MCF 10A (cell line): ENCODE measurements at regions of chr15 and their contacts with region 1.

Region 1: DNA sequence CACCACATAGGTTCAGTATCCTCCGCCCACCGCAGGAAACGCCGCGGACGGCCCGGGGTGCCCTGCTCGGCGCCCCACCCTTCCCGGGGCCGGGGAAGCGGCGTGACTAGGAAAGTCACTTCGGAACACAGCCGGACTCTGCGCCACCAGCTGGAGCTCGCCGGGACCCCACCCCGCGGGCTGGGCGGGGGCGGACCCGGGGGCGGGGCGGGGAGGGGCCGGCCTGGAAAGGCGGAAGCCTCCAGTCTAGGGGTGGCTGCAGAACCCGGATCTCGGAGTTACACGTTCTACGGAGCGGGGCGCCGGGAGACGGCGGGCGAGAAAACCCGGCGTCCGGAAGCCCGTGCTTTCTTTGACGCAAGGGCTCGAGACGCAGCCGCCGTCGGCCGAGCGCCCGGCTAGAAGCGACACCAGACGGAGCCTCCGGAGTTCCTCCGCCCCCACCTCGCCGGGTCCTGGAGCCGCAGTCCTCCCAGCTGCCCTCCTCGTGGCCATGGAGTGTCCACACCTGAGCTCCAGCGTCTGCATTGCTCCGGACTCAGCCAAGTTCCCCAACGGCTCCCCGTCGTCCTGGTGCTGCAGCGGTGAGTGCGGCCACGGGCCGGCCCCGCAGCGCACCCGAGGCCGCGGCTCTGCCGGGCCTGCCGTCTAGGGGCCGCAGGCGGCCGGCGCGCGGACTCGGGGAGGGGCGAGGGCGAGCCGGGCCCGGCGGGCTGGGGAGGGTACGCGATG is at the start of gene USP3:
- DNase-seq: peak; percentile 93
- H3K4me3 Mint-ChIP-seq: peak within 1 kb of the TSS; percentile 87
- H3K27ac Mint-ChIP-seq: peak within 1 kb of the TSS; percentile 97
- H3K4me1 Mint-ChIP-seq: peaks cover 43% of the 10 kb centered on the region
- H3K27me3 Mint-ChIP-seq: no peaks in the 10 kb centered on the region
- CTCF ChIP-seq: peak; percentile 40
- total RNA-seq, gene USP3: 59.0 and 70.2 TPM in 2 replicates

Region 2: GRCh38 chr15:63402498-63403253 is 101.7 kb before region 1 on chr15:
- CTCF ChIA-PET with region 1: interaction called, 3 read pairs
- POLR2A ChIA-PET with region 1: interaction called, 4 read pairs
- intact Hi-C with region 1: loop called (anchors 10 kb)
- DNase-seq: peak; percentile 58
- H3K4me3 Mint-ChIP-seq: no peak overlapping the region
- H3K27ac Mint-ChIP-seq: no peak overlapping the region
- H3K4me1 Mint-ChIP-seq: peaks cover 6% of the 10 kb centered on the region
- H3K27me3 Mint-ChIP-seq: no peaks in the 10 kb centered on the region
- CTCF ChIP-seq: peak; percentile 59

Region 3: DNA sequence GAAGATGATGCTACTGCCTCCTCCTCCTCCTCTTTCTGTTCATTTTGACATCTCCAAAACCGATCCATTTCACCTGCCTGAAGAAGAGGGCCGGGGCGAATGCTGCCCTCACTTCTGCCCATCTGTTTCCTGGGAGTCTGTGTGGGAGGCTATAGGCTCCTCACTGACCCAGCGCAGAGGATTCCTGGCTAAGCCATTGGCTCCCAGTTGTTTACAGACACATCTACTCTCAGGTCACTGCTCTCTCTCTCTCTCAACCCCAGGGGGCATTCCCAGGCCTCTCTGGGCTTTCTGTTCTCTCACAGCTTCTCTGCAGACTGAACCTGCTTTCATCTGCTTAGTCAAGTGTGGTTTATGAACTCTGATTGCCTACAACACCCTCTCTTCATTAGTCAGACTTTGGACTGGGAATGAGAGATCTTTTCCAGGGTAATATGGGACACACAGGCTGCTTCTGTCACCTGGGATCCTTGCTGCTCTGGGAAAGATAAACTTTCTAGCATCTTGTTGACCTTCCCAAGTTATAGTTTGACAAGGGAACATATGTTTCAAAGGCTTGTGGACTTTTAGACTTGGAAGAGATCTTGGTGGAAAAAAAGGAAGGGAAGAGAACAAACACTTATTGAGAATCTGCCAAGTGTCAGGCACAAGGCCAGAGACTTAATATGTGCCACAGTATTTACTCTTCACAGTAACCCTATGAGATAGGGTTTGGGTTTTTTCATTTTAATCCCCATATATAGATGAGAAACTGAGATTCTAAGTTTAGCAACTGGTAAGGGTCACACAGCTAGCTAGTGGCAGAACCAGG is 30.2 kb before region 1 on chr15:
- CTCF ChIA-PET with region 1: interaction called, 4 read pairs
- POLR2A ChIA-PET with region 1: interaction called, 26 read pairs
- intact Hi-C with region 1: loop called (anchors 1 kb)
- DNase-seq: peak; percentile 43
- H3K4me3 Mint-ChIP-seq: no peak overlapping the region
- H3K27ac Mint-ChIP-seq: no peak overlapping the region
- H3K4me1 Mint-ChIP-seq: peaks cover 21% of the 10 kb centered on the region
- H3K27me3 Mint-ChIP-seq: no peaks in the 10 kb centered on the region
- CTCF ChIP-seq: no peak

Region 4: DNA sequence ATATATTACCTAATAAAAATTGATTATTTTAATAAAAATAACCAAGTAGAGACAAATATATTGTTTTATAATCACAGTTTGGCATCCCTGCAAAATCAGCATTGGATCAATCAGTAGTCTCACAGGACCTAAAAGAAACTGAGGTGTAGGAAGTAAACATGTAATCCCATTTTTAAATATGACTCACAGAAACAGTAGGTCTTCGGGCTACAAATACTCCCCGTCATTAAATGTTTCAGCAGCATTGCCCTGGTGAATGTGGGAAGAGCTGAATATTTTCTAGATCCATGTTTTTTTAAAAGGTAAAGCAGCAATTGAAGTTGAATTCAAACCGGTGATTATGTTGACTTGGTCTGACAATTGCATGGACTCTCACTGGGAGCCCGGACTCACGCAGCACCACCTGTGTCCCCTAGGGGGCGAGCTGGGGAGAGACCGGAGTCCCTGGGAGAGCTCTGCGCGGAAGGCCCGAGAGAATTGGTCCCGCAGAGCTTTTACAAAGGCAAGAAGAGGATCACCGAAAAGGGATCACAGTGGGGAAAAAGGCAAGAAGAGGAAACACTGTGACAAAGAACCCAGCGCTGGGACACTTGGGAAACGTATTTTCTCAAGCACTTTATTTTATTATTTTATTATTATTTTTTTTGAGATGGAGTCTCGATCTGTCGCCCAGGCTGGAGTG is 17.2 kb before region 1 on chr15:
- CTCF ChIA-PET with region 1: interaction called, 13 read pairs
- POLR2A ChIA-PET with region 1: interaction called, 222 read pairs
- intact Hi-C with region 1: loop called (anchors 1 kb)
- DNase-seq: peak; percentile 81
- H3K4me3 Mint-ChIP-seq: no peak overlapping the region
- H3K27ac Mint-ChIP-seq: peak overlapping the region; percentile 23
- H3K4me1 Mint-ChIP-seq: peaks cover 24% of the 10 kb centered on the region
- H3K27me3 Mint-ChIP-seq: no peaks in the 10 kb centered on the region
- CTCF ChIP-seq: peak; percentile 71

Region 5: DNA sequence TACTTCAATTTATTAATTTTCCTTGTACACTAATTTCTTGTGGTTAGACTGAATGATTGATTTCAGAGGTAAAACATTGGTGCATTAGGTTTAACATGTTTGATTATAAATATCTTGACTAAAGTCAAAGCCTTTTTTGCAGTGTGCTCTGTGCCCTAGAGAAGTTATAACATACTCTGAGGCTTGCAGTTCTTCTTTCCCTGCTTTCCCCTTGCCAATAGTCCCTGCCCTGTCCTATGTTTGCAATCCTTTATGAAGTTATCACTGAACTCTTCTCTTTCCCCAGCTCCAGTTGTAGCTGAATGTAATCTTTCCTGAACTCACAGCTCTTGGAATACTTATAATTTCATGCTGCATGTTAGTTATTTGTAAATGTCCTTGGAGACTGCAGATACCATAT is 35.6 kb after region 1 on chr15:
- CTCF ChIA-PET with region 1: interaction called, 8 read pairs
- POLR2A ChIA-PET with region 1: interaction called, 18 read pairs
- intact Hi-C with region 1: no loop called
- DNase-seq: no peak
- H3K4me3 Mint-ChIP-seq: no peak overlapping the region
- H3K27ac Mint-ChIP-seq: no peak overlapping the region
- H3K4me1 Mint-ChIP-seq: peaks cover 10% of the 10 kb centered on the region
- H3K27me3 Mint-ChIP-seq: no peaks in the 10 kb centered on the region
- CTCF ChIP-seq: no peak

Region 6: DNA sequence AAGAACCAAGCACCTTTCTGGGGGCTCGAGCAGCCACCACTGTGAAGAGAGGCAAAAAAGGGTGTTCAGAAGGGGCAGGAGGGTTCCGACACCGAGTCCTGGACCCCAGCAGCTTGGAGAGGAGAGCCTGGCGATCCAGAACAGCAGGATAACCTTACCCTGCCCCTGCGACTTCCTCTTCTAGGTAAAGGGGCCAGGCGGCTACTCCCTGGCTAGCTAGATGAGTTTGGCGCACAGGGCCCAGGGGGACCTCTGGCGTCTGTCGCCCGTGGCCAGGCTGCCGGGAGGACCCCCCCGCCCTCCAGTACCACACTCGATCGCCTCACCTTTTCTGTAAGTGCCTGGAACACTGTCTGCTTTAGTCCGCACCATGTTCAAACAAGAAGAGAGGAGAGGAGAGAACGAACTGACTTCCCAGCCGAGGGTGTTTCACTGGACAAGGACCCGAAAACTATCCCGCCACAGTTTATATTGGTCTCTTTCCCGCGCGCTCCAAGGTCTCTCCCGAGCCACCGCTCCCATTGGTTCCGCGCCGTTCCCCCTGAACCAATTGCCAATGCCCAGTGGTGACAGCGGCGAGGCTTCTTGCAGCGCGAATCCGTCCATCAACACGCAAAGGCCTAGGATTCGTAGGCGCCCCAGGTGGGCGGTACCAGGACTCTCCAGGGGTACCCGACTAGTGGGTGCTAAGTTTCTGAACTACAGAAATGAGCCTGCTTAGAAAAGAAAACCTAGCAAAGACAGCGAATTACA is 876.8 kb after region 1 on chr15 and contains the start of gene PCLAF:
- CTCF ChIA-PET with region 1: no interaction called
- POLR2A ChIA-PET with region 1: no interaction called
- intact Hi-C with region 1: no loop called
- DNase-seq: peak; percentile 97
- H3K4me3 Mint-ChIP-seq: peak within 1 kb of the TSS; percentile 77
- H3K27ac Mint-ChIP-seq: peak within 1 kb of the TSS; percentile 35
- H3K4me1 Mint-ChIP-seq: peaks cover 13% of the 10 kb centered on the region
- H3K27me3 Mint-ChIP-seq: no peaks in the 10 kb centered on the region
- CTCF ChIP-seq: no peak
- total RNA-seq, gene PCLAF: 8.6 and 22.2 TPM in 2 replicates